Sigmoid colon (tissue), 7 donors: ENCODE measurements at regions of chr3 and their contacts with region 1.

Region 1: GRCh38 chr3:151265866-151266265 is 12.5 kb downstream of the P2RY14 start:
- DNase-seq: no peak
- H3K4me3 ChIP-seq: no peak overlapping the region
- H3K27ac ChIP-seq: peak overlapping the region; percentile 60 to 80 (median 72)
- H3K4me1 ChIP-seq: peaks cover 0 to 78% (median 19%) of the 10 kb centered on the region in 4 donors
- H3K27me3 ChIP-seq: no peaks in the 10 kb centered on the region
- CTCF ChIP-seq: no peak
- EP300 ChIP-seq: no peak
- POLR2A ChIP-seq: no peak

Region 2: DNA sequence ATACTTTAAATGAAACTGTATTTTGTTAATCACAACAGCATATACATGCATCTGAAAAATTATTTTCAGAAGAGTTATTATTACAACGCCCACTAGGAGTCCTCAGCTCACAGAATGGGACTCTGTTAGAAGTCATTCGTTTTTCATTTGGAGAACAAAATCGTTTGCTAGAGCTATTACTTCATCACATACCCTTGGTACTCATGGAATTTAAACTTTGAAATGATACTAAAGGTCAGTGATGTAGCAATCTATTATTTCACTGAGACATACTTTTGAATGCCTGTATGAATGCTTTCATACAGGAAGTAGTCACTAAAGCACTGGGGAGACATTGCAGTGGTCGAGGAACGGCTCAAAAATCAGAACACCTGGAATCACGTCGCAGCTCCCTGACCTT is 1200.9 kb after region 1 on chr3:
- intact Hi-C with region 1: loop called (anchors 10 kb)
- DNase-seq: no peak
- H3K4me3 ChIP-seq: no peak overlapping the region
- H3K27ac ChIP-seq: peak overlapping the region in 2 of 4 donors; percentile 29 to 45
- H3K4me1 ChIP-seq: peaks cover 0 to 15% (median 3%) of the 10 kb centered on the region in 4 donors
- H3K27me3 ChIP-seq: no peaks in the 10 kb centered on the region
- CTCF ChIP-seq: peak in 3 of 4 experiments; percentile 10 to 42 (median 31)
- EP300 ChIP-seq: no peak
- POLR2A ChIP-seq: no peak